Sigmoid colon (tissue), 7 donors: ENCODE measurements at regions of chr7 and their contacts with region 1.

Region 1: DNA sequence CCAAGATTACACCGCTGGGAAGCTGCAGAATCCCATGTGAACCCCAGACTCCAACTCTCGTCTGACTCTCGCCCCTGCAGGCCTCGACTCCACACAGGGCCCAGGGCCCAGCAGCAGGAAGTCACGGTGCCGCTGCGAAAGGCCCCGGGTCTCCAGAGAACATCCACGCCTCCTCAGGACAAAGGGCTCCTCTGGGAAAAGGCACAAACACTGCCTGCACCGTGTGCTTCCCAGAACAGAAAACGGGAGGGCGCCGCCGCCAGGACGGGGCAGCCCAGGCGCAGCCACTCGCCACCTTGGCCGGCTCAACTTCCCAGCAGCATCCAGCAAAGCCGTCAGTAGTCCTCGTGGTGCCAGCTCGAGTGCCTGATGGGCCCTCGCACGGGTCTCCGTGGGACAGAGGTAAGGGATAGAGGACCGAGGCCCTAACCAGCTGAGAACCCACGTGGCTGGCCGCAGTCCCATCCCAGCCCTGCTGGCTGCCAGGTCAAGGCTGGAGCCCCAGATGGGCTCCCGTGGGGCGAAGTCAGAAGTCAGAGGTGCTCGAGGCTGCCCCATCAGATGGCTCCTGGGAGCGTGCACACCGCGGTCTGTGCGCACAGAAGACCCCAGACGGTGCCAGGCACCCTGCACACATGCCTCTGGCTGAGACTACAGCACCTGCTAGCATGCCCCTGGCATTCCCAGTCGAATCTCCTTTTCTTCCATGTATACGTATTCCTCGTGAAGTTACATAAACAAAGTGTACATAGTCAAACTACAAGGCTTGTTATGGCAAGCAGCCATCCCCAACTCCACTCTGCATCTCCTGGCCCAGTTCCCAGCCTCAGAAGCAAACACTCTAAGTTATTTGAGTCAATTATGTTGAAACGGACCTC is 60.2 kb downstream of the MAD1L1 start:
- DNase-seq: no peak
- H3K4me3 ChIP-seq: peak overlapping the region in 1 of 4 donors; percentile 3
- H3K27ac ChIP-seq: peak overlapping the region; percentile 49 to 77 (median 70)
- H3K4me1 ChIP-seq: peaks cover 0 to 48% (median 41%) of the 10 kb centered on the region in 4 donors
- H3K27me3 ChIP-seq: no peaks in the 10 kb centered on the region
- CTCF ChIP-seq: no peak
- EP300 ChIP-seq: no peak
- POLR2A ChIP-seq: no peak

Region 2: GRCh38 chr7:455110-455928 is 1717.2 kb before region 1 on chr7:
- intact Hi-C with region 1: no loop called
- DNase-seq: no peak
- H3K4me3 ChIP-seq: no peak overlapping the region
- H3K27ac ChIP-seq: no peak overlapping the region
- H3K4me1 ChIP-seq: peaks cover 0 to 26% (median 9%) of the 10 kb centered on the region in 4 donors
- H3K27me3 ChIP-seq: peaks cover 4 to 43% (median 17%) of the 10 kb centered on the region in 3 donors
- CTCF ChIP-seq: no peak
- EP300 ChIP-seq: no peak
- POLR2A ChIP-seq: no peak

Region 3: DNA sequence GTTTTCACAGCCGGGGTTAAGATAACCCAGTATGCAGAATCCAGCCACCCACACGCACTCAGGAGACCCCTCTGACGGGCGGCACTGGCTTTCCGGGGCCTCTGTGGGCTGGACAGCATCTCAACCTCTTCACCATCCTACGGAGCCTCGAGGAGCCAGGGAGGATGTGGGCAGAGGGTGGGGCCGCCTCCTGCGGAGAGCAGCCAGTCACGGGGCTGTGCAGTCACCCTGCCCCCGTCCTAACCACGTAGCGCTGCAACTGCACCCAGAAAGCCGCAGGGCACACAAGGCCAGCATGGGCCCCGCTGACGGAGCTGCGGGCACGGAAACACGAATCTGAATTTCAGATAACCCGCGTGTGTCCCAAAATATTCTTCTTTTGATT is 232.2 kb before region 1 on chr7:
- intact Hi-C with region 1: no loop called
- DNase-seq: peak; percentile 78
- H3K4me3 ChIP-seq: no peak overlapping the region
- H3K27ac ChIP-seq: no peak overlapping the region
- H3K4me1 ChIP-seq: no peaks in the 10 kb centered on the region
- H3K27me3 ChIP-seq: no peaks in the 10 kb centered on the region
- CTCF ChIP-seq: no peak
- EP300 ChIP-seq: no peak
- POLR2A ChIP-seq: no peak

Region 4: GRCh38 chr7:2109936-2110585 is 62.5 kb before region 1 on chr7:
- intact Hi-C with region 1: loop called (anchors 5 kb)
- DNase-seq: no peak
- H3K4me3 ChIP-seq: no peak overlapping the region
- H3K27ac ChIP-seq: peak overlapping the region in 2 of 4 donors; percentile 63 to 68
- H3K4me1 ChIP-seq: peaks cover 0 to 33% (median 26%) of the 10 kb centered on the region in 4 donors
- H3K27me3 ChIP-seq: no peaks in the 10 kb centered on the region
- CTCF ChIP-seq: no peak
- EP300 ChIP-seq: no peak
- POLR2A ChIP-seq: no peak

Region 5: GRCh38 chr7:2203766-2204300 is 31.3 kb after region 1 on chr7:
- intact Hi-C with region 1: loop called (anchors 1 kb)
- DNase-seq: peak; percentile 67
- H3K4me3 ChIP-seq: no peak overlapping the region
- H3K27ac ChIP-seq: peak overlapping the region in 3 of 4 donors; percentile 40 to 65 (median 60)
- H3K4me1 ChIP-seq: peaks cover 0 to 40% (median 36%) of the 10 kb centered on the region in 4 donors
- H3K27me3 ChIP-seq: no peaks in the 10 kb centered on the region
- CTCF ChIP-seq: peak in 1 of 4 experiments; percentile 7
- EP300 ChIP-seq: no peak
- POLR2A ChIP-seq: no peak